ENCODE measurements at regions of chr1 and their contacts with region 1.

Region 1: DNA sequence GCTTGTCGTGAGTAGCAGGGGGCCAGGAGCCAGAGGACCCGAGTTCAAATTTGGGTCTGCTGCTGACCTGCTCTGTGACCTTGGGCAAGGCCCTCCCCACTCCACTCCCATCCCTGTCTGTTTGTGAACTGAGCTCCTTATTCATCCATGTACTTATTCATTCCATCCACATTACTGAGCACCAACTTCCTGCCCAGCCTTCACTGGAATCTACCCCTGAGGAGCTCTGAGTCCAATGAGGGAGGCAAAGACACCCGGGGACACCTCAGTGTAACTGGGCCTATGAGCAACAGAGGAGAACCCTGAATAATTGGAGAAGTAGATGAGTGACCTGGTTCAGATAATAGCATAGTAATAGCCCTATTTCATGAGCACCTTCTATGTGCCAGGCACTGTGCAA is 8.9 kb downstream of the BSND start:
- DNase-seq: no peak
- H3K4me3 ChIP-seq: no peak overlapping the region
- H3K27ac ChIP-seq: no peak overlapping the region
- H3K4me1 ChIP-seq: no peaks in the 10 kb centered on the region
- H3K27me3 ChIP-seq: no peaks in the 10 kb centered on the region
- CTCF ChIP-seq: no peak
- POLR2A ChIP-seq: no peak

Region 2: GRCh38 chr1:54872036-54872331 is 135.6 kb before region 1 on chr1:
- intact Hi-C with region 1: no loop called
- DNase-seq: no peak
- H3K4me3 ChIP-seq: no peak overlapping the region
- H3K27ac ChIP-seq: no peak overlapping the region
- H3K4me1 ChIP-seq: no peaks in the 10 kb centered on the region
- H3K27me3 ChIP-seq: no peaks in the 10 kb centered on the region
- CTCF ChIP-seq: no peak
- POLR2A ChIP-seq: no peak

Region 3: GRCh38 chr1:54950369-54951163 is 57.1 kb before region 1 on chr1:
- intact Hi-C with region 1: loop called (anchors 10 kb)
- DNase-seq: peak; percentile 76 to 81
- H3K4me3 ChIP-seq: peak overlapping the region in 2 of 3 donors; percentile 25 to 58
- H3K27ac ChIP-seq: peak overlapping the region; percentile 58 to 89
- H3K4me1 ChIP-seq: peaks cover 0 to 5% of the 10 kb centered on the region in 2 donors
- H3K27me3 ChIP-seq: no peaks in the 10 kb centered on the region
- CTCF ChIP-seq: peak; percentile 82 to 92 (median 91)
- POLR2A ChIP-seq: no peak

Region 4: GRCh38 chr1:55021965-55022546 is 14.4 kb after region 1 on chr1:
- intact Hi-C with region 1: loop called (anchors 1 kb)
- DNase-seq: peak; percentile 75 to 88
- H3K4me3 ChIP-seq: no peak overlapping the region
- H3K27ac ChIP-seq: no peak overlapping the region
- H3K4me1 ChIP-seq: no peaks in the 10 kb centered on the region
- H3K27me3 ChIP-seq: no peaks in the 10 kb centered on the region
- CTCF ChIP-seq: peak in 2 of 3 donors; percentile 81 to 90
- POLR2A ChIP-seq: no peak

Region 5: DNA sequence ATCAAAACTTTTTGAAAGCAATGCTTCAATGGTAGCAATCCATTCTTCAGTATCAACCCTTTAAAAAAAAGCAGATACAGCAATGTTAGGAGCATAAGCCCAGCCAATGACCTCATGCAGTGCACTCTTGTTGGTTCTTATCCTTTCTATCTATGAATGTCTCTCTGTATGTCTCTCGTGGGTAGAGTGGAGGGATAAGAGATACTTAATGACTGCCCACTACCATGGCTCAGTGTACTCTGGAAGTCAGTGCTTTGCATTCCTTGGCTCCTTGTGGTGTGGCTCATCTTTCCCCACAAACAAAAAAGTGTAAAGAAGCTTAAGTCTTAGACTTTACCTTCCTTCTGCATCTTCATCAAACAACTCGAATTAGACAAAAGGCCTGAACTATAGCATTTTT is 82.1 kb after region 1 on chr1:
- intact Hi-C with region 1: no loop called
- DNase-seq: no peak
- H3K4me3 ChIP-seq: no peak overlapping the region
- H3K27ac ChIP-seq: no peak overlapping the region
- H3K4me1 ChIP-seq: no peaks in the 10 kb centered on the region
- H3K27me3 ChIP-seq: no peaks in the 10 kb centered on the region
- CTCF ChIP-seq: no peak
- POLR2A ChIP-seq: no peak